Posterior vena cava (tissue), 2 donors: ENCODE measurements at regions of chr17 and their contacts with region 1.

Region 1: DNA sequence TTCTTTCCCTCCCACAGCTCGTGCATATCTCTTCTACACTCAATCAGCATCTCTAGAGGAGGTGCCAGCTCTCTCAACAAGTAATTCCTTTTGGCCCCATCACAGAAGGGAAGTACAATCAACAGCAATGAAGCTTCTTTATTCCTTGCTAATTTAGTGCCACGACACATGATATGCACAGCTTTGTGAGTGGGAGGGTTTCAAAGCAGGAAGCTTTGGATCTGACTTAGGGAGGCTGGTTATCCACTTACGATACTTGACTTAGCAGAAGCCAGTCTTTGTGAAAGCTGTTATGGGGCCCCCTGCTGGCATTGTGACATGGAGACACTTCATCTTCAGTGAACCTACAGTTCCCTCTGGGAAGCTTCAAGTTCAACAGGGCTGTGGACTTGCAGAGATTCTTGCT is 81.0 kb downstream of the TMEM100 start:
- DNase-seq: peak; percentile 89

Region 2: DNA sequence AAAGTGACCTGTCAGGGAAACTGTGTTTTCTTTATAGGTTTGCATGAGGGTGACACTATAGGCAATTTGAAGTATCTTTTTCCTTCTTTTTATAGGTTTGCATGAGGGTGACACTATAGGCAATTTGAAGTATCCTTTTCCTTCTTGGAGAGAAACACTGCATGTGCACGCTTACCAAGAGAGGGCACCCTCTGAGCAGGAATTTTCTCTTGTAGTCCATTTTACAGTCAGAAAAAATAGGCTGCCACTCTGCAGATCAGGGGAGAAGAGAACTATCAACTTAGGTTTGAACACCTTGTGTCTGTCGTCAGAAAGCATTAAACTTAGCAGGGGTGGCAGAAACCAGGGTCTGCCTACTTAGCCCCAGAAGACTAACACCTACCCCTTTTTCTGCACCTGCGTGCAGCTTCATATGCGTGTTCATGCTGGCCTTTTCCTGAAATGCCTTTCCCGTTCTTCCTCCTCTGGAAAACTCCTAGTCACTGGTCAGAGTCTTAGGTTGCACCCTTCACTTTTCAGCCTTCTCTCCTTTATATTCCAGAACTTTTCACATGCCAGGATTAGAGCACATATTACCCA is 114.0 kb before region 1 on chr17:
- intact Hi-C with region 1: loop called in 1 of 2 experiments (anchors 10 kb)
- DNase-seq: no peak